Activated CD4-positive, alpha-beta T cell treated with anti-CD3 and anti-CD28 coated beads, Interleukin-2, amount 10 ng/mL, durations not matched to agents 7 days and 5 days (primary cell): ENCODE measurements at regions of chr9 and their contacts with region 1.

Region 1: DNA sequence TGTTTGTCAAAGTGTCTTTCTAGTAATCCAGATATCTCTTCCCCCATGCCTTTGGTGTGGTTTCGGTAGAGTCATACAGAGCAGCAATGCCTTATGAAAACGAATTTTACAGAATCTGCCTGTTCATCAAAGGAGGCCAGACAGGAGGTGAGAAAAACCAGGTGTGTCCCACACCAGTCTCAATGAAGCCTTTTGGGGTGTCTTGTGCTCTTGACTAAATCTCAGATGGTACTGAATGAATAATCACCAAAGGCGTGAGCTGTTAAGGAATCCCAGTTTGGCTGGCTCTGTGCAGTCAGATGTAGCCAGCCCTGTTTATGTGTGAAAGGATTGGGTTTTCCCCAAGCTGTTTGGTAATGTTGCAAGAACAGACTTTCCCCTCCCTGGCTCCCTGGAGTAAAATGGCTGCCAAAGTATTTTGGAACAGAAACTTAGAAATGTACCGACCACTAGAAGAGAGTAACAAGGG is 70.8 kb upstream of the CDKN2B start:
- DNase-seq: peak; percentile 79
- H3K4me3 Mint-ChIP-seq: peak overlapping the region; percentile 0
- H3K27ac Mint-ChIP-seq: peak overlapping the region; percentile 83
- H3K4me1 Mint-ChIP-seq: peaks cover 49% of the 10 kb centered on the region
- H3K27me3 Mint-ChIP-seq: peaks cover 44% of the 10 kb centered on the region

Region 2: DNA sequence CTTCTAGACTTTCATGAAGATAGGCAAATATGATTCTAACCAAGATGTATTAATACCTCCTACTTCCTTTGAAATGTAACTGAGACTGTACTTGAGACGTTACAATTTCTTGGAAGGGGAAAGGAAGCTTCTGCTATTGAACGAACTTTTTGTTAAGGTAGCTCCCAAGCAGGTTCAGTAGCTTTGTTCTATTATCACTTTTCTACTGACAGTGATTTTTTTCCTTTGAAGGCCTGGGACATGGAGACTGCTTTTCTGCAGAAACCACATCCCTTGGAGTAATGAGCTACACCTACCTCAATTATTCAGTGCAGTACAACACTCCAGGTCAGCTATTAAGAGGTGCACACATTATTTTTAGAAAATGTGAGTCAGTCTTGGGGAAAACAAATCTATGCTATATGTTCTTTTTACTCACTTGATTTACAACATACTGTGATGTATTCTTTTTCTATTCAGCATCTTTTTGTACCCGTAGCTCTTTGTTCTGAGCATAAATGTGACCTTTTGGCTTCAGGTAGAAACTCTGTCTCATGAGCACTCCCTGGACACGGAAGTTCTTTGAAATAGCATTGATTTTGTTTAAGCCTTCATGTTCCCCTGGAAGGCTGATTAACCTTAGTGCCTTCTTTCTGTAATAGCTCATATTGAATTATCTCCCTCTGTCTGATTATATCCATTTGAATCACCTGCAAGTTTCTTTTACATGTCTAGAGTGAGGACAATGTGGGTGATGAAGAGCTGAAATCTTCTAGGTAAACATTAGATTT is 14.3 kb before region 1 on chr9:
- CTCF ChIA-PET with region 1: interaction called, 27 read pairs
- POLR2A ChIA-PET with region 1: no interaction called
- DNase-seq: no peak
- H3K4me3 Mint-ChIP-seq: no peak overlapping the region
- H3K27ac Mint-ChIP-seq: peak overlapping the region; percentile 65
- H3K4me1 Mint-ChIP-seq: peaks cover 47% of the 10 kb centered on the region
- H3K27me3 Mint-ChIP-seq: peaks cover 35% of the 10 kb centered on the region

Region 3: DNA sequence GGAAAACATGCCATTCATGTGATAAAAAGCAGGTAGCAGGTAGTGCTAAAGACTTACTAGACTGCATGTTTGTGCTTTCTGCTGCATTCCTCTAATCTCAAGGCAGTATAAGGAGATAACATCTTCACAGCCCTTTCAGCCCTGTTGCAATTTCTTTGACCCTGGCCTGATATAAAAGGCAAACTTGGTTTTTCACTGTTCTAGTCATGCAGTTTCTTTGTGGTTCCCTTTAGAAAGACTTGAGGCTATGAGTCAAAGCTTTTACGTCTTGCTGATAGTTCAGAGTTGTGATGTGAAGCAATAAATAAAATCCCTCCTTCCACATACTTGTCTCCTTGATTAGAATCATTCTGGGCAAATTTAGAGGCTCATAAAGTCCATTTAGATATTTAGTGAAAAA is 17.8 kb after region 1 on chr9:
- CTCF ChIA-PET with region 1: no interaction called
- POLR2A ChIA-PET with region 1: no interaction called
- DNase-seq: no peak
- H3K4me3 Mint-ChIP-seq: no peak overlapping the region
- H3K27ac Mint-ChIP-seq: no peak overlapping the region
- H3K4me1 Mint-ChIP-seq: peaks cover 22% of the 10 kb centered on the region
- H3K27me3 Mint-ChIP-seq: peaks cover 58% of the 10 kb centered on the region

Region 4: DNA sequence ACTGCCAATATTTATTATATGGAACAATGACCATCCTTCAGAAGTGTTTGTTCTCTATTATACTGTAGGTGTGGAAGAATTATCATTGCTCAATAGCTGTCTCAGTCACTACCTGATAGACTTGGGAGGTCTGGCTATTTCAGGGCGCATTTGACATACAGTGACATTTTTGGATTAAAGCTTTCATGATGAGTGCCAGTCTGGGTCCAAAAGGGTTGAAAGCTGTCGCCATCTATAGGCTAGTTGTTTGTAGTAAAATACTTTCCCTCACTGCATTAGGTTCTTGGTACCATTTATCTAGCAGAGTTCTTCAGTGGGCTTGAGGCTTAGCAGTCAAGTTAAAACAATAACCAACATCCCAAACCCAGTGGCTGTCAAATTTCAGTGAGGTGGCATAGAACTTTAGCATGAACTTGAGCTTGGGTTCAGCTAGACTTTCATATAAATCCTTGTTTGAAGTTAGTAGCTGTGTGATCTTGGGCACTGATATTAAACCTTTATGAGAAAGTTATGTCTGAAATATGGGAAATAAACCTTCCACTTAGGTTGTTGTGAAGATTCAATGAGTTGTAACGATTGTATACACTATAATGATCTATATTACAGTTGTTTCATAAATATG is 39.7 kb after region 1 on chr9:
- CTCF ChIA-PET with region 1: no interaction called
- POLR2A ChIA-PET with region 1: no interaction called
- DNase-seq: peak; percentile 36
- H3K4me3 Mint-ChIP-seq: no peak overlapping the region
- H3K27ac Mint-ChIP-seq: no peak overlapping the region
- H3K4me1 Mint-ChIP-seq: peaks cover 18% of the 10 kb centered on the region
- H3K27me3 Mint-ChIP-seq: peaks cover 69% of the 10 kb centered on the region

Region 5: DNA sequence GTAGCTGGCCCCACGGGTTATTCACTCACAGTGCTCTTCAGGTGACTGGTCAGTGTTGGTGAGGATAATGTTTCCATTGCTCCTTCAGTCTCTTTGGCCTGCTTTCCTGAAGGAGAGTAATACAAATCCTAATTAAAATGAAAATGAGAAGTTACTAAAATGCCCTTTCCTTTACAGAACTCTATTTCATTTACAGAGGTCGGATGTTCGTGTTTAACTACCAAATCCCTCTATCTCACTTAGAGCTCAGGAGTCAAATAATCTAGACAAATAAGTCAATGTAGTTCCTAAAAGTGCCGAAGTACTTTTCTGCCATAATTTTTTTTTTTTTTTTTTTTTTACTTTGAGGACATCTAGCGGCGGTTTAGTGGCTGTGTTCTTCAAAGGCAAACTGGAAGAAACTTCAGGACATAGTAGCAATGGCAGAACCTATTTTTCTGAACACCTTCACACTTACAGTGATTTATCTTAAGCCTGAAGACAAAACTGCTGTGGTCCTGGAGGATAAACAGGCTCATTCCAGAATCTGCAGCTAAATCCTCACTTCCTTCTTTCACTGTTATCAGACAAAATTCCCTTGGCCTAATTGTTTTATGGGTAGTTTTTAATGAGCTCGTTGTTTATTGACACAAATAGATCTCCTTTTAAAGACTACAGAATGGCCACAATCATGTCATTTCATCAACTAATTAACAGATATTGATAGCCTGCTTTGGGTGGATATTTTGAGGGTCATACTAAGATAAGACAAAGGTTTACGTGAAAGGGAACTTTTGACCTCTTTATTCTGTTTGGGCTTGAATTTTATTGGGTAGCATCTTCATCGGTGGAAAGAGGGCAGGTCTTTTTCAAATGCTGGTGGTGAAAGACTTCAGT is 159.1 kb after region 1 on chr9:
- CTCF ChIA-PET with region 1: no interaction called
- POLR2A ChIA-PET with region 1: no interaction called
- DNase-seq: no peak
- H3K4me3 Mint-ChIP-seq: no peak overlapping the region
- H3K27ac Mint-ChIP-seq: no peak overlapping the region
- H3K4me1 Mint-ChIP-seq: peaks cover 25% of the 10 kb centered on the region
- H3K27me3 Mint-ChIP-seq: peaks cover 34% of the 10 kb centered on the region